CD4-positive, alpha-beta memory T cell (primary cell): ENCODE measurements at regions of chr10 and their contacts with region 1.

Region 1: GRCh38 chr10:89251409-89252224 is at the start of gene LIPA:
- DNase-seq: peak; percentile 92 to 98 (median 95)
- H3K4me3 ChIP-seq: peak within 1 kb of the TSS; percentile 58 to 87
- H3K4me3 Mint-ChIP-seq: peak within 1 kb of the TSS; percentile 84 to 96 (median 90)
- H3K27ac ChIP-seq: peak within 1 kb of the TSS; percentile 56
- H3K27ac Mint-ChIP-seq: peak within 1 kb of the TSS; percentile 60 to 88 (median 81)
- H3K4me1 ChIP-seq: peaks cover 21% of the 10 kb centered on the region
- H3K4me1 Mint-ChIP-seq: peaks cover 17 to 29% (median 21%) of the 10 kb centered on the region in 4 donors
- H3K27me3 ChIP-seq: no peaks in the 10 kb centered on the region
- H3K27me3 Mint-ChIP-seq: peaks cover 3 to 5% of the 10 kb centered on the region in 2 donors
- total RNA-seq, gene LIPA: 55.5 to 60.2 TPM

Region 2: DNA sequence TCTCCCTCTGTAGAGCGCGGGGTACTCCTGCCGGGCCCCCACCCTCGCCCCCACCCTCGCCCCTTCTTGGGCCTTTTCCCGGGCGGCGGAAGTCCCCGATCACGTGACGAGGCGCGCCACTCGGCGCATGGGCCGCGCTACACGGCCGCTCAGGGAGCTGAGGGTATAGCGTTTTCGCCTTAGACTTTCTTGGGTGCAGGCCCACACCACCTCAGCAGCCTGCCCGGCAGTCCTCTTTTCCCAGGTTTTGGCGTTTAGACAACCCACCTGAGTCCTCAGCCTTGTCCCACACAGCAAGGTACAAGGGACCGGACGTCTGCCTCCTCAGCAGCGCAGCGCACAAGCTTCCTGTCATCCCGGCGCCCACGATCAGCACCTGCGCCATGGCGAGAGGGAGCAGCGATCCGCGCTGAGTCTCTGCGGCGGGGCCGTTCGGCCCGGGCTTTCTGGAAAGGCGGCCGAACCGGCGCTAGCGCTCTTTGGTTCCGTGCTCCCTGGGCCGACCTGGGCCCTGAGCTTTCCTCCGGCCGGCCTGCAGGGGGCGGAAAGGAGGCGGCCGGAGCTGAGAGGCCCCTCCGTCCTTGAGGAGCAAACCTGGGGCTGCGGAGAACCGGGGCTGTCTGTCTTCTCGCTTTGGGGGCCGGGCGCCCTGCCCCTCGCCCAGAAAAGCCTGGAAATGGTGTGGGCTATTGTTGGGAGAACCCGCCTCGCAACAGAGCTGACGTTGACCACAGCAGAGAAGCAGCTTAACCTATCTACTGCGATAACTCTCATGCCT is 668.6 kb before region 1 on chr10 and contains the start of gene RNLS:
- CTCF ChIA-PET with region 1: interaction called, 3 read pairs
- POLR2A ChIA-PET with region 1: interaction called, 4 read pairs
- intact Hi-C with region 1: loop called (anchors 1 kb)
- DNase-seq: peak; percentile 60 to 73 (median 65)
- H3K4me3 ChIP-seq: peak within 1 kb of the TSS; percentile 72 to 89
- H3K4me3 Mint-ChIP-seq: peak within 1 kb of the TSS; percentile 91 to 96 (median 93)
- H3K27ac ChIP-seq: peak within 1 kb of the TSS; percentile 77
- H3K27ac Mint-ChIP-seq: peak within 1 kb of the TSS; percentile 78 to 96 (median 93)
- H3K4me1 ChIP-seq: peaks cover 7% of the 10 kb centered on the region
- H3K4me1 Mint-ChIP-seq: peaks cover 6 to 26% (median 14%) of the 10 kb centered on the region in 4 donors
- H3K27me3 ChIP-seq: no peaks in the 10 kb centered on the region
- H3K27me3 Mint-ChIP-seq: no peaks in the 10 kb centered on the region
- total RNA-seq, gene RNLS: 1.7 to 1.9 TPM

Region 3: GRCh38 chr10:89301721-89302445 is 50.3 kb after region 1 on chr10 and contains the start of gene IFIT2:
- CTCF ChIA-PET with region 1: interaction called, 3 read pairs
- POLR2A ChIA-PET with region 1: interaction called, 26 read pairs
- intact Hi-C with region 1: loop called (anchors 1 kb)
- DNase-seq: peak; percentile 52 to 70 (median 62)
- H3K4me3 ChIP-seq: peak within 1 kb of the TSS; percentile 63 to 69
- H3K4me3 Mint-ChIP-seq: peak within 1 kb of the TSS; percentile 90 to 98 (median 94)
- H3K27ac ChIP-seq: peak within 1 kb of the TSS; percentile 75
- H3K27ac Mint-ChIP-seq: peak within 1 kb of the TSS; percentile 96 to 99 (median 98)
- H3K4me1 ChIP-seq: peaks cover 30% of the 10 kb centered on the region
- H3K4me1 Mint-ChIP-seq: peaks cover 22 to 40% (median 28%) of the 10 kb centered on the region in 4 donors
- H3K27me3 ChIP-seq: no peaks in the 10 kb centered on the region
- H3K27me3 Mint-ChIP-seq: no peaks in the 10 kb centered on the region
- total RNA-seq, gene IFIT2: 10.4 to 10.7 TPM

Region 4: GRCh38 chr10:89391917-89392756 is 140.5 kb after region 1 on chr10 and contains the start of gene IFIT1:
- CTCF ChIA-PET with region 1: interaction called, 6 read pairs
- POLR2A ChIA-PET with region 1: interaction called, 14 read pairs
- intact Hi-C with region 1: loop called (anchors 1 kb)
- DNase-seq: peak; percentile 57 to 81 (median 79)
- H3K4me3 ChIP-seq: peak within 1 kb of the TSS; percentile 69 to 82
- H3K4me3 Mint-ChIP-seq: peak within 1 kb of the TSS; percentile 85 to 97 (median 94)
- H3K27ac ChIP-seq: peak within 1 kb of the TSS; percentile 68
- H3K27ac Mint-ChIP-seq: peak within 1 kb of the TSS; percentile 76 to 98 (median 95)
- H3K4me1 ChIP-seq: peaks cover 31% of the 10 kb centered on the region
- H3K4me1 Mint-ChIP-seq: peaks cover 13 to 35% (median 31%) of the 10 kb centered on the region in 4 donors
- H3K27me3 ChIP-seq: no peaks in the 10 kb centered on the region
- H3K27me3 Mint-ChIP-seq: no peaks in the 10 kb centered on the region
- total RNA-seq, gene IFIT1: 5.1 to 6.3 TPM

Region 5: GRCh38 chr10:89643431-89644331 is 392.1 kb after region 1 on chr10:
- CTCF ChIA-PET with region 1: no interaction called
- POLR2A ChIA-PET with region 1: no interaction called
- intact Hi-C with region 1: loop called (anchors 5 kb)
- DNase-seq: peak; percentile 74 to 82 (median 75)
- H3K4me3 ChIP-seq: peak overlapping the region; percentile 55 to 75
- H3K4me3 Mint-ChIP-seq: no peak overlapping the region
- H3K27ac ChIP-seq: peak overlapping the region; percentile 43
- H3K27ac Mint-ChIP-seq: no peak overlapping the region
- H3K4me1 ChIP-seq: peaks cover 16% of the 10 kb centered on the region
- H3K4me1 Mint-ChIP-seq: peaks cover 8 to 11% (median 10%) of the 10 kb centered on the region in 4 donors
- H3K27me3 ChIP-seq: no peaks in the 10 kb centered on the region
- H3K27me3 Mint-ChIP-seq: peaks cover 3 to 4% of the 10 kb centered on the region in 2 donors

Region 6: DNA sequence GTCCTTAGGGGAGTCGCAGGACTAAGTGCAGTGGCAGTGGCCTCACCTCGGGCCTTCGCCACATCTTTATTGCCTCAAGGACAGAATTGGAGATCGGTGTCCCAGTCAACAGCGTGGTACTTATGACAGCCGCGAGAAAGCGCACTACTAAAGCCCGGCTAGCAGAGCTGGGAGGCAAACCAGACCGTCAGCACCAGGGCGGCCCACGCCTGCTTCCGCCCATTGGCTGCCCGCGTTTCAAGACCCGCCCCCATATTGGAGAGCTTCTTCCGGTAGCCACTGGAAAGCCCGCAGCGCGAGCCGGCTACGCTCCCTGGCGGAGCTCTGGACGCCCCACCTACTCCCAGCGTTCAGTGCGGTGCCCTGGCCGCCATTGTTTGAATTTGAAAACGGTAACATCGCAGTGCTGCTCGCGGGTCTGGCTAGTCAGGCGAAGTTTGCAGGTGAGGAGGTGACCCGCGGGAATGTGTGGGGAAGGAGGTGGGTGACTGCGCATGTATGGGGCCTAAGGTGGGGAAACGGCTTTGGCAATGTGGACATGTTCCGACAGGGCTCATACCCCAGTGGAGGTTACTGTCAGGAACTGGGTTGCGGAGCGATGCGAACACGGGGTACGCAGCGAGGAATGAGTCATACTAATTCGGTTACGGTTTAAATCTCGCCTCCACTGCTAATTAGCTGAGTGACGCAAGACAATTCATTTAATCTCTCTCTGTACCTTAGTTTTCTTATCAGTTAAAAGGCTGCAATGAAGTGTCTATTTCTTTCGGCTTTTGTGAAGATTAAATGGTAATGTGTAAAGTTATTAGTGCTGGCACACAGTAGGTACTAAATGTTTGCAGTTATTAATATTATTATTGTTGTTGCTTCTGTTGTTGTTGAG is 449.9 kb after region 1 on chr10 and contains the start of gene KIF20B:
- CTCF ChIA-PET with region 1: no interaction called
- POLR2A ChIA-PET with region 1: interaction called, 4 read pairs
- intact Hi-C with region 1: loop called (anchors 2 kb)
- DNase-seq: peak; percentile 95 to 97 (median 96)
- H3K4me3 ChIP-seq: peak within 1 kb of the TSS; percentile 74 to 99
- H3K4me3 Mint-ChIP-seq: peak within 1 kb of the TSS; percentile 97 to 99 (median 99)
- H3K27ac ChIP-seq: peak within 1 kb of the TSS; percentile 75
- H3K27ac Mint-ChIP-seq: peak within 1 kb of the TSS; percentile 97 to 99 (median 99)
- H3K4me1 ChIP-seq: peaks cover 35% of the 10 kb centered on the region
- H3K4me1 Mint-ChIP-seq: peaks cover 21 to 53% (median 33%) of the 10 kb centered on the region in 4 donors
- H3K27me3 ChIP-seq: no peaks in the 10 kb centered on the region
- H3K27me3 Mint-ChIP-seq: no peaks in the 10 kb centered on the region
- total RNA-seq, gene KIF20B: 20.7 to 21.4 TPM